ENCODE measurements at regions of chr16 and their contacts with region 1.

Region 1: DNA sequence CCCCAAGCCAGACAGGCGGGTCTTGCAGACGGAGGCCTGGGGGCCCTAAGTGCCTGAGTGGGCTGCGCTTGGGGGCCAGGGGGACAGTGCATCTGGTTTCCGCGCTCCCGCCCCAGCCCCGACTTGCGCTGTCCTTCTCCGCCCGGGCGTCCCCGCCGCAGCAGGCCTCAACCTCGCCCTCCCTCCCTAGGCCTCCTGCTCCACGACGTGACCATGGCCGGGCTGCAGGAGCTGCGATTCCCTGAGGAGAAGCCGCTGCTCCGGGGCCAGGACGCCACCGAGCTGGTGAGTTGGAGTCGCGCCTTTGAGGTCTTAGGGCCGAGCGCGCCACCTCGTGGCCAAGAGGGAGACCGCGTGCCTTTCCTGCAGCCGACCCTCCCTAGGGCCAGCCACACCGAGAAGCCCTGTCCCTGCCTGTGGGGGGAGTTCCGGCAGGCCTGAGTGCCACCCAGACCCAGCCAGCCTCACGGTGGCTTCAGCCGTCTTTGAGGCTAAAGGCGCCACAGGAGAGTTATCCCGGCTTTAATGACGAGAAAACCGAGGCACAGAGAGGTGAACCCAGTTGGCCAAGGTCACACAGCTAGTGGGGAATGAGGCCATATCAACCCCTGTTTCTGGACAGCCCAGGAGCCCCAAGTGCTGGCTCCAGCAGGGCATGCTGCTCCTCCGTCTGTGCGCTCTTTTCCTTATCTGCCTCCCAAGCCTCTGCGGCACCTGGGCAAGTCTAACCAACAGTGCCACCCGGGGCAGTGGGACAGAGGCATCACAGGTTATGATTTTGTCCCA is 12.2 kb upstream of the NDRG4 start:
- DNase-seq: peak; percentile 87 to 88
- ATAC-seq: peak; percentile 89 to 98
- H3K4me3 ChIP-seq: no peak overlapping the region
- H3K27ac ChIP-seq: peak overlapping the region in 1 of 2 experiments; percentile 65; a peak in 2 of 6 replicates
- H3K4me1 ChIP-seq: 0 out of 3 replicates have a peak, but pooled peaks cover 2% of the 10 kb centered on the region
- CTCF ChIP-seq: peak; percentile 86
- EP300 ChIP-seq: no peak
- POLR2A ChIP-seq: no peak
- RAD21 ChIP-seq: peak; percentile 95 to 97

Region 2: GRCh38 chr16:58284469-58284868 is 203.3 kb before region 1 on chr16:
- CTCF ChIA-PET with region 1: no interaction called
- POLR2A ChIA-PET with region 1: no interaction called
- DNase-seq: no peak
- ATAC-seq: no peak
- H3K4me3 ChIP-seq: no peak overlapping the region
- H3K27ac ChIP-seq: no peak overlapping the region
- H3K4me1 ChIP-seq: no peaks in the 10 kb centered on the region
- CTCF ChIP-seq: no peak
- EP300 ChIP-seq: no peak
- POLR2A ChIP-seq: no peak
- RAD21 ChIP-seq: no peak

Region 3: DNA sequence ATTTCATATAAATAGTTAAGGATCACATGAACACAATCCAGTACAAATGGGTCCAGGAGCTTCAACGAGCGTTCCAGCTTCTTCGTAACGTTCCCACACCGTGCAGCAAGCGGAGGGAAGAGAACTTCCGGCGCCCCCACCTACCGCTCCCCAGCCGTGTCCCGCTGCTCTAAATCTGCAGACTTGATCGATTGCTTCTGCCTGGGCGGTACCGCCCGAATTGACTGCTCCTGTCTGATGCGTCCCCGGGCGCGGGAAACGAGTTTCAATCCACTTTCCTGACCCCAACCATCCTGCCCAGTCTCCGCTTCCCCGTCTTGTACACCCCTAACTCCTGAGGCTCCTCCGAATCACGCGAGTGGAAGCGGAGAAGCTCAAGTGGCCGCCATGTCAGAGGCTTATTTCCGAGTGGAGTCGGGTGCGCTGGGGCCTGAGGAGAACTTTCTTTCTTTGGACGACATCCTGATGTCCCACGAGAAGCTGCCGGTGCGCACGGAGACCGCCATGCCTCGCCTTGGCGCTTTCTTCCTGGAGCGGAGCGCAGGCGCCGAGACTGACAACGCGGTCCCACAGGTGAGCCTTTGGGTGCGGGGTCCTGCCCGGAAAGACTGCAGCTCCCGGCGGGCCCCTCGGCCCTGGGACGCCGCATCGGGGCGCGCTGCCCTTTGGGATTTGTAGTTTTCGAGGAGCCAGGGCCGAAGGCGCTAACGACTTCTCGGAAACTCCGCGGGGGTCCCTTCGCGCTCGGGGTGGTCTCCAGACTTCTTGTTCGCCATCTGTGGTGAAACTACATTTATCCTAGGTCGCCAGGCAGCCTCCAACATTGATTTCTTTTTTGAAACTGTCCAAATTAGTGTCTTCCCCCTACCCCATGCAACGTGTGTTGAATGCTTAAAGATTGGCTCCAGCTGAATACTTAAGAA is 95.3 kb before region 1 on chr16 and contains the start of gene GINS3:
- CTCF ChIA-PET with region 1: interaction called, 13 read pairs
- POLR2A ChIA-PET with region 1: interaction called, 3 read pairs
- DNase-seq: peak; percentile 93 to 94
- ATAC-seq: peak; percentile 97 to 98
- H3K4me3 ChIP-seq: peak within 1 kb of the TSS; percentile 88
- H3K27ac ChIP-seq: peak within 1 kb of the TSS; percentile 89 to 91
- H3K4me1 ChIP-seq: 0 out of 3 replicates have a peak, but pooled peaks cover 11% of the 10 kb centered on the region
- CTCF ChIP-seq: no peak
- EP300 ChIP-seq: no peak
- POLR2A ChIP-seq: peak; percentile 57
- RAD21 ChIP-seq: no peak
- polyA plus RNA-seq, gene GINS3: 21.0 and 22.3 TPM in 2 replicates

Region 4: GRCh38 chr16:58409316-58409973 is 78.3 kb before region 1 on chr16:
- CTCF ChIA-PET with region 1: interaction called, 18 read pairs
- POLR2A ChIA-PET with region 1: no interaction called
- DNase-seq: peak in 1 of 2 experiments; percentile 30
- ATAC-seq: peak in 1 of 2 experiments; percentile 40; a peak in 2 of 6 replicates
- H3K4me3 ChIP-seq: no peak overlapping the region
- H3K27ac ChIP-seq: peak overlapping the region; percentile 35 to 43; a peak in 5 of 6 replicates
- H3K4me1 ChIP-seq: peaks cover 17% of the 10 kb centered on the region
- CTCF ChIP-seq: no peak
- EP300 ChIP-seq: no peak
- POLR2A ChIP-seq: no peak
- RAD21 ChIP-seq: no peak

Region 5: DNA sequence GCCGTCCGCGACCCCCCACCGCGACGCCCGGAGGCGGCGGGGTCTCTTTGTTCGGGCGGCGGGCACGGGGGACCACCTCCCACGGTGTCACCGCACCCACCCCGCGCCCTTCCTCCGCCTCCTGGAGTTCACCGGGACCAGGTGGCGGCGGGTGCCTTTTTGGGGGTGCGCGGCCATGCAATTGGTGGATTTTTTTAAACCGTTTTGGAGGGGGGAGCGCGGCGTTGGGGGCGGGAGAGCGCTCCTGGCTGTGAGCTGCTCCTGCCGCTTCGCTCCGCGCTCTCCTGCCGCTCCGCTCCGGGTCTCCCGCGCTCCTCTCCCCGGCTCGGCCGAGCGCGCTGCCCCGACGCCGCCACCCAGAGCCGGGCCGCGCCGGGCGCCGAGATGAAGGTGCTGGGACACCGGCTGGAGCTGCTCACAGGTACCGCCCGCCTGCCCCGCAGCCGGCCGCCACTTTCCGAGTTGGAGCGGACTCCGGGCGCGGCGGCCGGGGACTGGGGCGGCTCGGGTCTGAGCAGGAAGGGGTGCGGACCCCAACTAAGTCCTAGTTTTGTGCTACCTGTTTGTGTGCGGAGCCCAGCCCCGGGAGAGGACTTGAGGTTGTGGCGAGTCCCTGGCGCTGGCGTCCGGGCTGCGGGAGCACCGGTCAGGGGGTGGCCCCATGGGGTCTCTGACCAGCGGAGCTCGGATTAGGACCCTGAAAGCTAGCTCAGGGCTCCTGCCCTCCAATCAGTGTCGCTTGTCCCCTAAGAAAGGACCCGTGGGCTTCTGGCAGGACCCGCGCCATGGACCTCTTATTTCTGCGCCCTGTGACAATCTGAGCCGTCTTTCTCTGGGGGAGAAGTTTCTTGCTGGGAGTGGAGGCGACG is 23.5 kb before region 1 on chr16:
- CTCF ChIA-PET with region 1: interaction called, 26 read pairs
- POLR2A ChIA-PET with region 1: interaction called, 3 read pairs
- DNase-seq: no peak
- ATAC-seq: peak; percentile 64 to 82
- H3K4me3 ChIP-seq: peak overlapping the region; percentile 74
- H3K27ac ChIP-seq: peak overlapping the region; percentile 60 to 84
- H3K4me1 ChIP-seq: peaks cover 22% of the 10 kb centered on the region
- CTCF ChIP-seq: no peak
- EP300 ChIP-seq: no peak
- POLR2A ChIP-seq: no peak
- RAD21 ChIP-seq: no peak; a peak in 1 of 5 replicates

Region 6: GRCh38 chr16:58476791-58477190 is 11.0 kb before region 1 on chr16:
- CTCF ChIA-PET with region 1: interaction called, 23 read pairs
- POLR2A ChIA-PET with region 1: no interaction called
- DNase-seq: no peak
- ATAC-seq: no peak
- H3K4me3 ChIP-seq: no peak overlapping the region
- H3K27ac ChIP-seq: no peak overlapping the region
- H3K4me1 ChIP-seq: no peaks in the 10 kb centered on the region
- CTCF ChIP-seq: no peak
- EP300 ChIP-seq: no peak
- POLR2A ChIP-seq: no peak
- RAD21 ChIP-seq: no peak

Region 7: DNA sequence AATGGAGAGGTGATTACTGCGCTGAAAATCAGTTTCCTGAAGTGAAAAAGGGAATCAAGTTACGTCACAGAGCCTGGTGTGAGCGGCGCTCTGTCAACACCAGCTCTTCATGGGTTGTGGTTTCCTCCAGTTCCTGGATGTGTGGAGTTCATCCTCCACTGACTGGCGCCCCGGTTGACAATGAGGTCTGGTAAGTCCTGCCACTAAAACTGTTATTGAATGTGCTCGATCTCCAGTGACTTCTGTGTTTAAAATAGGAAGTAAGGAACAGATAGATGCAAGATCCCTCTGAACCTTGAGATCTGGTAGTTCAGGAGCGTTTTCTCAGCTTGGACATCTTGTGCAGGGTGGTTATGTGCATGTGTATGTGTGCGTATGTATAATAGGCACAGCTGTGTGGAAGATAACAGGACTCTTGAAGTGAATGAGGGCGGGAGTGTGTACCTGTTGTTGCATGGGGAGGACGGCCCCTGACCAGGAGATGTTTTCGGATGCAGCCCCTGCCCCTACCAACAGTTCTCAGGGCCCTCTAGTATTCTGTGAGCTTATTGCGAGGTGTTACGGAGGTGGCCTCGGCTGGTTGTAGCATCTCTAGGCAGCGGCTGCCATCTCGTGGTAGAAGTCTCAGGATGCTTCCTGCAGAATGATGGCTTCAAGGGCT is 268.4 kb after region 1 on chr16:
- CTCF ChIA-PET with region 1: interaction called, 10 read pairs
- POLR2A ChIA-PET with region 1: no interaction called
- DNase-seq: peak; percentile 70 to 81
- ATAC-seq: peak; percentile 98
- H3K4me3 ChIP-seq: no peak overlapping the region
- H3K27ac ChIP-seq: no peak overlapping the region
- H3K4me1 ChIP-seq: no peaks in the 10 kb centered on the region
- CTCF ChIP-seq: peak; percentile 83
- EP300 ChIP-seq: no peak
- POLR2A ChIP-seq: no peak
- RAD21 ChIP-seq: peak; percentile 89 to 94

Measured in A549 (cell line).